HEK293 (cell line): ENCODE measurements at regions of chr1 and their contacts with region 1.

Region 1: GRCh38 chr1:65209005-65209885 is 61.2 kb downstream of the AK4 start:
- H3K4me3 ChIP-seq: no peak overlapping the region
- H3K27ac ChIP-seq: no peak overlapping the region
- H3K4me1 ChIP-seq: no peaks in the 10 kb centered on the region; the same call in 1 of the 2 replicates
- CTCF ChIP-seq: no peak

Region 2: DNA sequence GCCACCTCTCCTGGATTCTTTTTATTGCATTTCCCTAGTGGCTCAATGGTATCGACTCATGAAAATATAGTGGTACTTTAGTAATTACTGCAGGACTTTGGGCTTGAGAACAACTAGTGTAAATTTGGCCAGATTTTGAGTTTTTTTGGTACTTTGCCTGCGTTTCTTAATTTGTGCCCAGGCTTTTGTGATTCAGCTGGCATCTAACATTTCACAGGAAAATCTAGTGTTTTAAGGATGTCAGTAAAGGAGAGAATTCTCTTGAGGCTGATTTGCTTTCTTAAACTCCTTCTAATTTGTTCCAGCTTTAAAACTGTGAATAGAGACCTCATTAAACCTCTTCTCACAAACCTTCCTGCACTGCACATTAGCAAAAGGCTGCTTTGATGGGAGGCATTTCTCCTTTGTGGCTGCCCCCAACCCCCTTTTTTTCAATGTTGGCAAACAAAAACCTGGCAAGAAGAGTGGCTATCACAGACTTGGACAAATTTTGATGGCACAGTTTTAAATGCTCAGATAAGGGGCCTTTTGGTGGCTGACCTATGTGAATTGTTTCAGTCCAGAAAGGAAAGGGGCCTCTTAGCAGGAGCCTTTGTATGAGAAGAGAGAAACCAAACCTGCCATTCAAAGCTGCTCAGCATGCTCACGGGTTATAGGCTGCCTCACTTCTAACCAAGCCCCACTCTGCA is 577.8 kb before region 1 on chr1:
- CTCF ChIA-PET with region 1: no interaction called
- POLR2A ChIA-PET with region 1: no interaction called
- H3K4me3 ChIP-seq: no peak overlapping the region
- H3K27ac ChIP-seq: no peak overlapping the region
- H3K4me1 ChIP-seq: no peaks in the 10 kb centered on the region
- CTCF ChIP-seq: no peak

Region 3: DNA sequence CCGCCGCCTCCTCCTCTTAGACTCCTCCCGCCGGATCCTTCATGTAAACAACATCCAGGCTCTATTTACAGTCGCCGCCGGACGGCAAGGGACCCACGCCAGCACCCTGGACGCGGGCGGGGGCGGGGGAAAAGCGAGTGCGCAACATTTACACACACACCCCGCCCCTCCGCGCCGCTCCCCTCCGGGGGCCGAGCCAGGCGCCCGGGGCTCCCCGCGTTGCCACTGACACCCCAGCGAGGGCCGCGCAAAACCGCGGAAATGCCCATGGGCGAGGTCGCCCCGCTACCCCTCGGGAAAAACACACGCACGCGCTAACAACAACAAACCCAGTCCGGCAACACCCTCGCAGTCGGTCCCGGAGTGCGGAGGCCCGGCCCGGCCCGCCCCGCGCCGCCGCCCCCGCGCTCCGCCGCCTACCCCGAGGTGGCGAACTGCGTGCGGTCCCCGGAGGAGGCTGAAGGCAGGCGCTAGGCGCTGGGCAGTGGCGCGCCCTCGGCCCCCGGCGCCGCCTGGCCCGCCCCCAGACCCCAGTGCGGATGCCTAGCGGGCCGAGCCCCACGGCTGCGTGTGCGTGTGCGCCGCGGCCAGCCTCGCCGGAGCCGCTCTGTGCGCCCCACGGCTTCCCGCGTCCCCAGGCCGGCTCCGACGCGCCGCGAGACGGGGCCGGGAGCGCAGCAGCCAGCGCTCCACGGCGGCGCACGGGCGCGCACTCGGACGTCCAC is 142.3 kb before region 1 on chr1:
- CTCF ChIA-PET with region 1: interaction called, 25 read pairs
- POLR2A ChIA-PET with region 1: interaction called, 3 read pairs
- H3K4me3 ChIP-seq: peak overlapping the region; percentile 75
- H3K27ac ChIP-seq: peak overlapping the region; percentile 91
- H3K4me1 ChIP-seq: peaks cover 13% of the 10 kb centered on the region
- CTCF ChIP-seq: no peak

Region 4: DNA sequence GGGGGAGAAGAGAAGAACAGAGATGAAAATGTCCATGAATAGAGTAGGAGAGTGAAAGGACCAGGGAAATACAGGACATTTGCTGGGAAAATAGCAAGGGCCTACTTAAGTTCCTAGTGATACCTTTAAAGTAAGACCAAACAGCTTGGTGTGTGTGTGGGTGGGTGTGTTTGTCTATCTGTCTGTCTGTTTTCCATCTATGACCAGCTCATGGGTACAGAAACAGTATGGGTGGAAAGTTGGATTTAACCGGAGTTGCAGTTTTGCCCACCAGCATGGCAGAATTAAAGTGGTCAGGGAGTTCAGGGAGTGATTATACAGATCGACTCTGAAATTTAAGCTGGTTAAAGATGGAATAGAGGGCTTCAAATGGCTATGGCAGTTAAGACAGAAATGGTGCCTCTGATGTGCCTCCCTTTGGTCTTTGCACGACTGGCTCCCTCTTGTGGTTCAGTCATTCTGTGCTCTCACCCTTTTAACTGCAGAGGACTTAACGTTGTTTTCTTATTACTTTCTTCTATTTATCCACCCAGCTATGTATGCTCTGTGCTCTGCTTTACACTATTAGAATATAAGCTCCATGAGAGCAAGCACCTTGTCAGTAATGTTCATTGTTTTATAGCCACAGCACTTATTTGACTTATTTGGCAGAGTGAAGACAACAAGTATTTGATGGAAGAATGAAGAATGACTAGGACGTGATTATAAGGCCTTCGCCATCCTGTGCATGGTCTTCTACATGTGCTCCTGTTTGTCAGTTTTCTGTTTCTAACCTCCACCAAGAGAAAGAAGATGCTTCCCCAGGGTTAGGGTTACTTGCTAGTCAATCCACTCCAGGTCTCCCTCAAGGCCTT is 133.9 kb before region 1 on chr1:
- CTCF ChIA-PET with region 1: interaction called, 20 read pairs
- POLR2A ChIA-PET with region 1: no interaction called
- H3K4me3 ChIP-seq: no peak overlapping the region
- H3K27ac ChIP-seq: no peak overlapping the region
- H3K4me1 ChIP-seq: no peaks in the 10 kb centered on the region
- CTCF ChIP-seq: peak; percentile 70; the same call in 1 of the 2 replicates

Region 5: DNA sequence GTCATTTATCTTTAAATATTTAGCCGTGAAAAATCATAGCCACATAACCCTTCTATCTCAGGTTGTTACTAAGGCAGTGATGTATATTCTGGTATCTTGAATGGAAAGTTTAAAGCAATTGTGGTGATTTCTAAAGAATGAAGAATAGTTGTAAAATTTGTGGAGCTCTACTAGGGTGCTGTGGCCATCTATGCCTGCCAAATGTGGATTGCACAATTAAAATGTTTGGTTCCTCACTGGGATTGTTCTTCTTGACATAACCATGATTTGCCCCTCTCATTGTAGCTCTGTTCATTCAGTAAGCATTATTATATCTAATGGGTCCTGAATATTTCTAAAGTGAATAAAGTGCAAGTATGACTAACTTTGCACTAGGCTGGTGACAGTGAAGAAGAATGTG is 11.1 kb before region 1 on chr1:
- CTCF ChIA-PET with region 1: interaction called, 10 read pairs
- POLR2A ChIA-PET with region 1: no interaction called
- H3K4me3 ChIP-seq: no peak overlapping the region
- H3K27ac ChIP-seq: no peak overlapping the region
- H3K4me1 ChIP-seq: no peaks in the 10 kb centered on the region
- CTCF ChIP-seq: no peak

Region 6: GRCh38 chr1:65279070-65279779 is 70.0 kb after region 1 on chr1:
- CTCF ChIA-PET with region 1: no interaction called
- POLR2A ChIA-PET with region 1: no interaction called
- H3K4me3 ChIP-seq: no peak overlapping the region
- H3K27ac ChIP-seq: no peak overlapping the region
- H3K4me1 ChIP-seq: no peaks in the 10 kb centered on the region
- CTCF ChIP-seq: no peak